IMR-90 (cell line): ENCODE measurements at regions of chr6 and their contacts with region 1.

Region 1: DNA sequence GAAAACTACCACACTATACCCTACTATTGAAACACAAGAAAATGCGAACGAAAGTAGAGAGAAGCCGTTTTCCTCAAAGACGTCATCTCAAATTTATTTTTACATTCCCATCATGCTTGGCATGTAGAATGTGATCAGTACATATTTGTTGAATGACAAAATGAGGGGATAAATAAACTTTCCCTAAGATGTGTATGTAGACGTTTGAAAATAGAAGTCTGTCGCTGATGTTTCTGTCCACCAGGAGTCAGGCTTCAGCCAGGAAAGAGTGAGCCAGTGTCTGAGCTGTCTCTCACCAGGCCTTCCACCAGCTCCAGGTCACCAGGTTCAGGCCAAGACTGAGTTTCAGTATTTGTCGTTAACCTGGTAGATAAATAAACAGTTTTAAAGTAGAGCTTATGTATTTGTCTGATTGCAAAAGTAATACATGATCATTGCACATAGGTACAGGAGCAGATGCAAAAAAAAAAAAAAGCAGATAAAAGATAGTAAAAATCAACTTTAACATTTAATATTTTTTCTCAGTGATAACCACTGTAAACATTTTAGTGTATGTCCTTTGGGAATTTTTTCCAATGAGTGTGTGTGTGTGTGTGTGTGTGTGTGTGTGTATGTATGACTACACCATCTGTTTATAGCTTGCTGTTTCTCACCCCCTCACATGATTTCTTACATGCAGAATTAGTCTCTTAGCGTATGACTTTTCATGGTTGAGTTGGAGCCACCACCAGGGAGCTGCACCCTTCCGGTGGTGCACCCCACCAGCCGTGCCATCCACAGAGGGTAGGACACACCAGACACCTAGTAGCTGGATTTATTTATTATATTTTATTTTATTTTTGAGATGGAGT is 26.2 kb downstream of the WRNIP1 start:
- DNase-seq: peak; percentile 97
- ATAC-seq: peak; percentile 84
- H3K4me3 ChIP-seq: peak overlapping the region; percentile 20; the same call in 1 of the 2 replicates
- H3K27ac ChIP-seq: peak overlapping the region; percentile 91
- H3K4me1 ChIP-seq: peaks cover 18% of the 10 kb centered on the region
- H3K27me3 ChIP-seq: no peaks in the 10 kb centered on the region
- CTCF ChIP-seq: peak; percentile 96
- POLR2A ChIP-seq: peak; percentile 76; the same call in 1 of the 2 replicates
- RAD21 ChIP-seq: peak; percentile 97

Region 2: DNA sequence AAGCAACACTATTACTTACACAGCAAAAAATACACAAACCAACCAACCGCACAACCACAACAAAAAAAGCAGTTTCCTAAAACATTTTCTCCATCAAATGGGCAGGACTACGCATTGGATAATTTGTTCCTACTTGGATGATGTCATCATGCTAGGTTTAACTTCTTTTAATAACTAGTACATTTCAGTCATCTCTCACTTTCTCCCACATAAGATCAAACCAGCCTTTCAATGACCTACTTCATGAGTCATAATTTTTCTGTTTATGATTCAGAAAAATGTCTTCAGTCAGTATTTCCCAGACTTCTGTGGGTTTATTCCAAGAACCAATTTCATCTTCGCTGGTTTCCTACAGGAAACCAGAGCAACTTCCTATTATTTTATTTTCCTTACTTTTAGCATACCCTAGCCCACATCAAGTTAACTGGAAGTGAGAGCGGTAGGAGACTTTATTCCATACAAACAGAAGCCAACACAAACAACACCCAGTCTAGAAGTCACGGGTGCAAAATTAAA is 680.1 kb before region 1 on chr6:
- CTCF ChIA-PET with region 1: no interaction called
- POLR2A ChIA-PET with region 1: no interaction called
- dilution Hi-C with region 1: no loop called
- in situ Hi-C with region 1: no loop called
- intact Hi-C with region 1: no loop called
- DNase-seq: peak; percentile 89
- ATAC-seq: peak; percentile 46
- H3K4me3 ChIP-seq: no peak overlapping the region
- H3K27ac ChIP-seq: no peak overlapping the region
- H3K4me1 ChIP-seq: peaks cover 1% of the 10 kb centered on the region; the same call in 1 of the 2 replicates
- H3K27me3 ChIP-seq: no peaks in the 10 kb centered on the region
- CTCF ChIP-seq: no peak
- POLR2A ChIP-seq: no peak
- RAD21 ChIP-seq: no peak

Region 3: DNA sequence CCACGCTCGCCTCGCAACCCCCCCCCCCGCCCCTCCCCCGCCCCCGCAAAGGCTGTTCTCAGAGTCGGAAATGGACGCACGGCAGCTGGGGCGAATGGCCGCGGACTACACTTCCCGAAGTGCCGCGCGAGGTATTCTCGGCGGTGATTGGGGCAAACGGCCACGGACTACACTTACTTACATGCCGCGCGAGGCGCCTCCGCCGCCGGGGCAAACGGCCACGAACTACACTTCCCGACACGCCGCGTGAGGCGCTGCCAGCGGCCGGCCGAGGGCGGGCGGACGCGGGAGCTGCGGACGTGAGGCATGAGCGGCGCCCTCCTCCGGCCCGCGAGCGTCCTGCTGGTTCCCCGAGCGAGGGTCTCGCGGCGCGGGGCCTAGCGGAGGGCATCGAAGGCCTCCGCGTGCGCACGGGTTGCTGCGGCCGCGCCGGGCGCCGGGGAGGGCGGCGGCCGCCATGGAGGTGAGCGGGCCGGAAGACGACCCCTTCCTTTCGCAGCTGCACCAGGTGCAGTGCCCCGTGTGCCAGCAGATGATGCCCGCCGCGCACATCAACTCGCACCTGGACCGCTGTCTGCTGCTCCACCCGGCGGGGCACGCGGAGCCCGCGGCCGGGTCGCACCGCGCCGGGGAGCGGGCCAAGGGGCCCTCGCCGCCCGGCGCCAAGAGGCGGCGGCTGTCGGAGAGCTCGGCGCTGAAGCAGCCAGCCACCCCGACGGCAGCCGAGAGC is 26.0 kb before region 1 on chr6 and contains the start of gene WRNIP1:
- CTCF ChIA-PET with region 1: interaction called, 10 read pairs
- POLR2A ChIA-PET with region 1: no interaction called
- dilution Hi-C with region 1: no loop called
- in situ Hi-C with region 1: no loop called
- intact Hi-C with region 1: loop called (anchors 1 kb)
- DNase-seq: peak; percentile 99
- ATAC-seq: peak; percentile 91
- H3K4me3 ChIP-seq: peak within 1 kb of the TSS; percentile 79
- H3K27ac ChIP-seq: peak within 1 kb of the TSS; percentile 86
- H3K4me1 ChIP-seq: peaks cover 18% of the 10 kb centered on the region
- H3K27me3 ChIP-seq: no peaks in the 10 kb centered on the region
- CTCF ChIP-seq: peak; percentile 86
- POLR2A ChIP-seq: peak; percentile 46
- RAD21 ChIP-seq: peak; percentile 24; the same call in 1 of the 2 replicates
- total RNA-seq, gene WRNIP1: 37.2 and 47.1 TPM in 2 replicates

Region 4: GRCh38 chr6:2846873-2847224 is 55.5 kb after region 1 on chr6:
- CTCF ChIA-PET with region 1: interaction called, 29 read pairs
- POLR2A ChIA-PET with region 1: interaction called, 5 read pairs
- dilution Hi-C with region 1: no loop called
- in situ Hi-C with region 1: loop called (anchors 5 kb)
- intact Hi-C with region 1: loop called (anchors 1 kb)
- DNase-seq: no peak
- ATAC-seq: no peak
- H3K4me3 ChIP-seq: peak overlapping the region; percentile 34; the same call in 1 of the 2 replicates
- H3K27ac ChIP-seq: peak overlapping the region; percentile 81
- H3K4me1 ChIP-seq: peaks cover 18% of the 10 kb centered on the region
- H3K27me3 ChIP-seq: no peaks in the 10 kb centered on the region
- CTCF ChIP-seq: no peak
- POLR2A ChIP-seq: no peak
- RAD21 ChIP-seq: no peak

Region 5: DNA sequence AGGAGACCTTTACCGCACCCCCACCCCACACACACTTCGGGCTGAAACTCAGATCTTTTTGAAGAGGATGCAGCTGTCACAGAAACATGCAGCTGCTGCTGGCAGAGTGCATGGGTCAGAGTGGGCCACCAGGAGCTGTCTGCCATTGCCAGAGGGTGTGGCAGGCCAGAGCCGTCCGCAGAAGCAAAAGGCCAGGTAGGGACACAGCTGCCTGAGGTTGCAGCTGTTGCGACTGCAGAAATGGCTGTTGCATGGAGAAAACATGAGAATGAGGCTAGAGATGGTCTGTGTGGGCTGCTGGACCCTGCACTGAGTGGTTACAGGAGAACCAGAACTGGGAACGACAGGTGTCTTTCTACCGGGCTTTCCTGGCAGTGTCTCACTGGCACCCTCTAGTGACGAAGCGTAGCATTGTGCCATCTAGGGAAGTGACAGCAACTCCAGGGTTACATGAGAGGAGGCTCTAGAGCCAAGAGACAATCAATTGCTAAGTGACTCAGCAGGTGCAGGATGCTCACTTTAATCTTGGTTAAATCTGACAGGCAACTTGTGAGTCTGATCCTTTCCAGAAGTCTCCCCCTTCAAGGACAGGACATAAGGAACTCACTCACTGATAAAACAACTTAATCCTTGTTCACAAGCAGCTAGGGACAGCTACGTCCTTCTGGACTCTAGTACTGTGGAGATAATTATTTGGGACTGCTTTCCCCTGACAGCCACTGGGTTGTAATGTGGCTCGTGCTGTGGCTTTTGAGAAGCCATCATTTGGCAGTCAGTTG is 140.8 kb after region 1 on chr6:
- CTCF ChIA-PET with region 1: interaction called, 6 read pairs
- POLR2A ChIA-PET with region 1: interaction called, 9 read pairs
- dilution Hi-C with region 1: no loop called
- in situ Hi-C with region 1: loop called (anchors 10 kb)
- intact Hi-C with region 1: loop called (anchors 1 kb)
- DNase-seq: peak; percentile 68
- ATAC-seq: peak; percentile 97
- H3K4me3 ChIP-seq: no peak overlapping the region
- H3K27ac ChIP-seq: no peak overlapping the region
- H3K4me1 ChIP-seq: no peaks in the 10 kb centered on the region
- H3K27me3 ChIP-seq: no peaks in the 10 kb centered on the region
- CTCF ChIP-seq: peak; percentile 90
- POLR2A ChIP-seq: no peak
- RAD21 ChIP-seq: peak; percentile 91